ENCODE measurements at regions of chr12 and their contacts with region 1.

Region 1: DNA sequence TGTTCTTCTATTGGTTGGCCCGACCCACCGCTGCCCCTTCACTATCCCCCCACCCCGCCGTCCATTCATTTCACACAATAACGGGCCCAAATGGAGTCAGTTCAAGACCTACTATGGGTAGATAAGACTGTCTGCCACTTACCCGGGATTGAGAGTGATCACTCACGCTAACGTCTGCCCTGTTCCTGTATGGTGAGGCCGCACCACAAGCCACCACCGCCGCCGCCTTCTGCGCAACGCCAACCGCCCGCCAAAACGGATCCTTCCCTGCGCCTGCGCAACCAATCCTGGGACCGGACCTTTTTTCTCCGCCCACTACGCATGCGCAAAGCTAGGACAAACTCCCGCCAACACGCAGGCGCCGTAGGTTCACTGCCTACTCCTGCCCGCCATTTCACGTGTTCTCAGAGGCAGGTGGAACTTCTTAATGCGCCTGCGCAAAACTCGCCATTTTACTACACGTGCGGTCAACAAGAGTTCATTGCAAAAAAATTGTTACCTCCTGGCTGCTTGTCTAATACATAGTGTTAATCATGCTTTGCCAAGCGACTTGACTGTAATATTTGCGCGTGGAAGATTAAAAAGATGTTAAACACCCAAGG is at the start of gene CBX5:
- DNase-seq: peak; percentile 99 to 100 (median 100)
- ATAC-seq: peak; percentile 45
- H3K4me3 ChIP-seq: peak within 1 kb of the TSS; percentile 80
- H3K4me3 Mint-ChIP-seq: no peak within 1 kb of the TSS
- H3K27ac ChIP-seq: peak within 1 kb of the TSS; percentile 93 to 95
- H3K27ac Mint-ChIP-seq: no peak within 1 kb of the TSS
- H3K4me1 ChIP-seq: peaks cover 55% of the 10 kb centered on the region
- H3K4me1 Mint-ChIP-seq: peaks cover 31% of the 10 kb centered on the region
- H3K27me3 ChIP-seq: no peaks in the 10 kb centered on the region
- H3K27me3 Mint-ChIP-seq: no peaks in the 10 kb centered on the region
- CTCF ChIP-seq: no peak
- total RNA-seq, gene CBX5: 38.8 to 38.9 TPM

Region 2: GRCh38 chr12:54220092-54220557 is 59.8 kb before region 1 on chr12:
- CTCF ChIA-PET with region 1: interaction called, 3 read pairs
- POLR2A ChIA-PET with region 1: interaction called, 13 read pairs
- intact Hi-C with region 1: loop called in 1 of 2 experiments (anchors 5 kb)
- DNase-seq: peak; percentile 46 to 80 (median 56)
- ATAC-seq: peak; percentile 57
- H3K4me3 ChIP-seq: no peak overlapping the region
- H3K4me3 Mint-ChIP-seq: no peak overlapping the region
- H3K27ac ChIP-seq: no peak overlapping the region
- H3K27ac Mint-ChIP-seq: no peak overlapping the region
- H3K4me1 ChIP-seq: peaks cover 35% of the 10 kb centered on the region
- H3K4me1 Mint-ChIP-seq: peaks cover 42% of the 10 kb centered on the region
- H3K27me3 ChIP-seq: no peaks in the 10 kb centered on the region
- H3K27me3 Mint-ChIP-seq: peaks cover 8% of the 10 kb centered on the region
- CTCF ChIP-seq: peak; percentile 60

Region 3: GRCh38 chr12:54259194-54260011 is 20.6 kb before region 1 on chr12:
- CTCF ChIA-PET with region 1: no interaction called
- POLR2A ChIA-PET with region 1: interaction called, 29 read pairs
- intact Hi-C with region 1: no loop called
- DNase-seq: peak in 9 of 14 experiments; percentile 14 to 73 (median 43)
- ATAC-seq: peak; percentile 93
- H3K4me3 ChIP-seq: peak overlapping the region; percentile 4
- H3K4me3 Mint-ChIP-seq: peak overlapping the region; percentile 66
- H3K27ac ChIP-seq: no peak overlapping the region
- H3K27ac Mint-ChIP-seq: peak overlapping the region; percentile 45
- H3K4me1 ChIP-seq: peaks cover 12% of the 10 kb centered on the region
- H3K4me1 Mint-ChIP-seq: peaks cover 31% of the 10 kb centered on the region
- H3K27me3 ChIP-seq: no peaks in the 10 kb centered on the region
- H3K27me3 Mint-ChIP-seq: no peaks in the 10 kb centered on the region
- CTCF ChIP-seq: no peak

Region 4: GRCh38 chr12:54324617-54325441 is 44.9 kb after region 1 on chr12 and contains the start of gene COPZ1:
- CTCF ChIA-PET with region 1: interaction called, 5 read pairs
- POLR2A ChIA-PET with region 1: interaction called, 76 read pairs
- intact Hi-C with region 1: loop called (anchors 1 to 2 kb)
- DNase-seq: peak; percentile 84 to 99 (median 90)
- ATAC-seq: peak; percentile 94
- H3K4me3 ChIP-seq: peak within 1 kb of the TSS; percentile 76
- H3K4me3 Mint-ChIP-seq: peak within 1 kb of the TSS; percentile 92
- H3K27ac ChIP-seq: peak within 1 kb of the TSS; percentile 67 to 78
- H3K27ac Mint-ChIP-seq: peak within 1 kb of the TSS; percentile 93
- H3K4me1 ChIP-seq: peaks cover 22% of the 10 kb centered on the region
- H3K4me1 Mint-ChIP-seq: peaks cover 36% of the 10 kb centered on the region
- H3K27me3 ChIP-seq: no peaks in the 10 kb centered on the region
- H3K27me3 Mint-ChIP-seq: no peaks in the 10 kb centered on the region
- CTCF ChIP-seq: peak; percentile 88
- total RNA-seq, gene COPZ1: 31.2 to 33.9 TPM

Region 5: DNA sequence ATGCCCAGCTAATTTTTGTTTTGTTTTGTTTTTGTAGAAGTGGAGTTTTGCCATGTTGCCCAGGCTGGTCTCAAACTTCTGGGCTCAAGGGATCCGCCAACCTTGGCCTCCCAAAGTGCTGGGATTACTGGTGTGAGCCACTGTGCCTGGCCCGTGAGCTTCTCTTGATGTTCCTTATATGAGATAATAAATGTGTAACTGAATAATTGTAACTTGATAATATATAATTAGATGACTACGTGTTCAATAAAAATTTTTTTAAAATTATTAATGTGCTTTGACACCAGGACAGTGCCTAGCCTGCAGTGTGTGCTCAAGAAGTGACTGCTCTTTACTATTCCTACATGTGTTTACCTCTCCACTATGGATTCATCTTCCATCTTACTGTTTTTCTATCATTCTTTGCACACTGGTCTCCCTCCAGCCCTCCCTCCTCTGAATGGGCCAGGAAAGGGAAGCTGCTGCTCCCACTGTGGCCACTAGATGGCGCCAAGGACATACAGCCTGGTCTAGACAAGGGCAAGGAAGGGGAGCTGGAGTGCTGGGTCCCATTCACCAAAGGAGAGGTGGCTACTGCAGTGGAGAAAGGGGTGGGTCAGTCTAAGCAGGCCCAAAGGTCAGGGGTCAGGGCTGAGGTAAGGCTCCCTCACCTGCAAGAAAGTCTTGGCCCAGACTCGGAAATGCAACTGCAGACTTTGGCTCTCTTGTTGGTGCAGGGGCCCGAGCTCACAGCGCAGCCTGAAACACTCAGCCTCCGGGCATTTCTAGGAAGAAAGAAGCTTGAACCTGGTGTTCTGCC is 119.2 kb after region 1 on chr12:
- CTCF ChIA-PET with region 1: interaction called, 3 read pairs
- POLR2A ChIA-PET with region 1: interaction called, 10 read pairs
- intact Hi-C with region 1: no loop called
- DNase-seq: peak; percentile 80 to 93 (median 88)
- ATAC-seq: peak; percentile 98
- H3K4me3 ChIP-seq: no peak overlapping the region
- H3K4me3 Mint-ChIP-seq: no peak overlapping the region
- H3K27ac ChIP-seq: no peak overlapping the region
- H3K27ac Mint-ChIP-seq: peak overlapping the region; percentile 4
- H3K4me1 ChIP-seq: peaks cover 13% of the 10 kb centered on the region
- H3K4me1 Mint-ChIP-seq: peaks cover 18% of the 10 kb centered on the region
- H3K27me3 ChIP-seq: no peaks in the 10 kb centered on the region
- H3K27me3 Mint-ChIP-seq: no peaks in the 10 kb centered on the region
- CTCF ChIP-seq: peak; percentile 97

Region 6: GRCh38 chr12:54658306-54659264 is 378.6 kb after region 1 on chr12:
- CTCF ChIA-PET with region 1: no interaction called
- POLR2A ChIA-PET with region 1: no interaction called
- intact Hi-C with region 1: no loop called
- DNase-seq: peak in 13 of 14 experiments; percentile 3 to 56 (median 21)
- ATAC-seq: no peak
- H3K4me3 ChIP-seq: no peak overlapping the region
- H3K4me3 Mint-ChIP-seq: no peak overlapping the region
- H3K27ac ChIP-seq: no peak overlapping the region
- H3K27ac Mint-ChIP-seq: no peak overlapping the region
- H3K4me1 ChIP-seq: no peaks in the 10 kb centered on the region
- H3K4me1 Mint-ChIP-seq: no peaks in the 10 kb centered on the region
- H3K27me3 ChIP-seq: peaks cover 8 to 9% of the 10 kb centered on the region in 2 experiments
- H3K27me3 Mint-ChIP-seq: peaks cover 48% of the 10 kb centered on the region
- CTCF ChIP-seq: peak; percentile 49

Measured in CD4-positive, alpha-beta T cell (primary cell).